ENCODE measurements at regions of chr2 and their contacts with region 1.

Region 1: DNA sequence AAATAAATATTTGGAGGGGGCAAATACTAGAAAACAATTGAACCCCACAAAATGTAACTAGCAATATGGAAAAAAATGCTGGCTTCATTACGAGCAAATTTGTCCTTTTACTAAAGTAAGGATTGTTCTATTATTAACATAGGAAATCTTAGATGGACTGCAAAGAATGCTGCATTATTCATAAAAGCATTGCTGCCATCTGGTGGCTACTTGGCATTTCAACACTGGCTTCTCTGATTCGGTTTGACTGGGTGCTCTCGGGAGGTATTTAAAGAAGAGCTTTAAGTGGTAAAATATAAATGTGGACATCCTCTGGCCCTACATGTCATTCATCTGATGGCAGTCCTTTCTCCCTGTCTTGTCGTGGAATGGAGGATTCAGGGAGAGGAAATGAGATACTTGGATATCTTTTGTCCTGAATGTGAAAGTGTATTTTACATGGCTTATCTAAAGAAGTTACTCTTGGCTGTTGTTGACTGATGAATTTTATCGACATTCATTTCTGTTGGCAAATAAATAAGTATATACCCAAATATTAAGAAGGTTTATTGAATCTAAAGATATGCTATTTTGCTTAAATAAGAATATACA is 130.2 kb downstream of the ARHGAP15 start:
- DNase-seq: peak; percentile 50
- ATAC-seq: peak; percentile 82; the same call in 1 of the 2 replicates
- H3K4me3 ChIP-seq: no peak overlapping the region
- H3K27ac ChIP-seq: no peak overlapping the region
- H3K4me1 ChIP-seq: no peaks in the 10 kb centered on the region
- H3K27me3 ChIP-seq: peaks cover 3% of the 10 kb centered on the region; the same call in 1 of the 2 replicates
- CTCF ChIP-seq: peak; percentile 79

Region 2: GRCh38 chr2:142693171-142693950 is 566.1 kb before region 1 on chr2:
- CTCF ChIA-PET with region 1: no interaction called
- POLR2A ChIA-PET with region 1: no interaction called
- in situ Hi-C with region 1: no loop called
- intact Hi-C with region 1: no loop called
- DNase-seq: no peak
- ATAC-seq: no peak
- H3K4me3 ChIP-seq: no peak overlapping the region
- H3K27ac ChIP-seq: no peak overlapping the region
- H3K4me1 ChIP-seq: no peaks in the 10 kb centered on the region
- H3K27me3 ChIP-seq: no peaks in the 10 kb centered on the region
- CTCF ChIP-seq: no peak

Region 3: DNA sequence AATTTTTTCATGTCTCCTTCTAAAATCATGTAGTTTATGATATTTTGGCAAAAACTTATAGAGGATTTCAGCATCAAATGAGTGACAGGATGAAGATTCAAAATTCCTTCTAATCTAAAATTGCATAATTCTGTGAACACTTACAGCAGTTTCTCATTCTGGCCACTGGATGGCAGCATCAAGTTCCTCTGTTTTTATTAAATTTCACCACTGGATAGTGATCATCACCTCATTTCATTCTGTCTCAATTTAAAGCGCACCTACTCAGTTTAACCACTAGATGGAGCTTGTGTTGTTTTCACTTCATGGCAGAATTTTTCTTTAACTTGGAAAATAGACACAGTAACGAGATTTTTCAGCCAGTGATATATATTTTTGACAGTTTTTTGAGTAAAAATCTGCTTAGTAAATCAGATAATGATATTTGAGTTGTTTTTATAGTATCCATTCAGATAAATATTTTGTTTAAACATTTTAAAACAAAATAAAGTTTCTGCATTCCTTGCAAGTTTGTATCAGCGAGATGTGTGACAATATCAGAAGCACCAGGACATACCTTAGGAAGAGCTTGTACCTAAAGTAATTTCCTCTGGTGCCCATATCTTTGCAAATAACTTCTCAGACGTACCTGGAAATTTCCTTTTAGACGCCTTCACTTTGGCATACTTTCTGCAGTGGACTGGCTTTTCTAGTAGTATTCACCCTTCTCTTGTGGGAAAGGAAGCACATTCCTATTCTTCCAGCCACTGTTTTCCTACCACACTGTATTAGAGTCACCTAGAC is 225.0 kb before region 1 on chr2:
- CTCF ChIA-PET with region 1: no interaction called
- POLR2A ChIA-PET with region 1: no interaction called
- in situ Hi-C with region 1: no loop called
- intact Hi-C with region 1: loop called (anchors 2 kb)
- DNase-seq: peak; percentile 61
- ATAC-seq: peak; percentile 80; the same call in 1 of the 2 replicates
- H3K4me3 ChIP-seq: no peak overlapping the region
- H3K27ac ChIP-seq: no peak overlapping the region
- H3K4me1 ChIP-seq: no peaks in the 10 kb centered on the region
- H3K27me3 ChIP-seq: no peaks in the 10 kb centered on the region
- CTCF ChIP-seq: peak; percentile 91; the same call in 1 of the 2 replicates

Region 4: GRCh38 chr2:143110758-143111428 is 148.6 kb before region 1 on chr2:
- CTCF ChIA-PET with region 1: interaction called, 6 read pairs
- POLR2A ChIA-PET with region 1: no interaction called
- in situ Hi-C with region 1: no loop called
- intact Hi-C with region 1: loop called (anchors 1 kb)
- DNase-seq: peak; percentile 43
- ATAC-seq: peak; percentile 85
- H3K4me3 ChIP-seq: no peak overlapping the region
- H3K27ac ChIP-seq: no peak overlapping the region
- H3K4me1 ChIP-seq: no peaks in the 10 kb centered on the region
- H3K27me3 ChIP-seq: no peaks in the 10 kb centered on the region; the same call in 1 of the 2 replicates
- CTCF ChIP-seq: peak; percentile 82

Region 5: DNA sequence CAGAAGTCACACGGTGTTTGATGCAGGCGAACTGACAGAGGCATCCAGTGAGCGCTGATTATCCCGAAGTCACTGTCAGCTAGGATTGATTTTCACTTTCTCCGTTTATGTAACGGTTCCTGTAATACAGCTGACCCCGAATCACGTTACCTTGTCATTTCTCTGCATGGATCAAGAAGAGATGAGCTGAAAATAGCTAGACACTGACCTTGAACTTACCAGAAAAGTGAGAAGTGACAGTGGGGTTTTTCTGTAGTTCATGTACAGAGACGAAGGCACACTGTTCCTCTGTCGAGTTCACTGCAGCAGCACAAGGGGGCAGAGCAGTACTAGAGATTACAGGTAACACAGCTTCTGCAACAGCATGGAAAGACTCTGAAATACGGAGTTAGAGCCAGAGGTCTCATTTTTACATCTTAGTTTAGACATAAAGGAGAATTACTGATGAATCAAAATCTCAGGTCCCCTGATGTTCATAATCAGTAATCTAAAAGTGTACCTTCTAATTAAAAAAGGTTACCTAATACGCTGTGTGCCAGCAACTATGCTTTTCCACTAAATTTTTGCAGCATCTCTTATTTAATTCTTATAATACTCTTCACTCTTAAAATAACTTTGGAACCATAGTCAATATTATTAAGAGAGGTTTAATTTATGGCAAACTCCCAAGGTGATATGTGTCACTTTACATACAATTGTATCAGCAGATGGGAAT is 97.2 kb before region 1 on chr2:
- CTCF ChIA-PET with region 1: no interaction called
- POLR2A ChIA-PET with region 1: no interaction called
- in situ Hi-C with region 1: no loop called
- intact Hi-C with region 1: loop called (anchors 1 kb)
- DNase-seq: peak; percentile 18
- ATAC-seq: peak; percentile 92
- H3K4me3 ChIP-seq: no peak overlapping the region
- H3K27ac ChIP-seq: no peak overlapping the region
- H3K4me1 ChIP-seq: no peaks in the 10 kb centered on the region
- H3K27me3 ChIP-seq: peaks cover 2% of the 10 kb centered on the region; the same call in 1 of the 2 replicates
- CTCF ChIP-seq: peak; percentile 72

Region 6: GRCh38 chr2:145090841-145091761 is 1831.6 kb after region 1 on chr2:
- CTCF ChIA-PET with region 1: no interaction called
- POLR2A ChIA-PET with region 1: no interaction called
- in situ Hi-C with region 1: no loop called
- intact Hi-C with region 1: no loop called
- DNase-seq: no peak
- ATAC-seq: no peak
- H3K4me3 ChIP-seq: no peak overlapping the region
- H3K27ac ChIP-seq: no peak overlapping the region
- H3K4me1 ChIP-seq: no peaks in the 10 kb centered on the region
- H3K27me3 ChIP-seq: no peaks in the 10 kb centered on the region
- CTCF ChIP-seq: no peak